ENCODE measurements at regions of chr21 and their contacts with region 1.

Region 1: GRCh38 chr21:37445228-37445627 is 78.7 kb downstream of the DYRK1A start:
- DNase-seq: no peak
- ATAC-seq: no peak
- H3K4me3 ChIP-seq: no peak overlapping the region
- H3K27ac ChIP-seq: no peak overlapping the region
- H3K4me1 ChIP-seq: peaks cover 14% of the 10 kb centered on the region
- H3K27me3 ChIP-seq: no peaks in the 10 kb centered on the region
- CTCF ChIP-seq: no peak

Region 2: DNA sequence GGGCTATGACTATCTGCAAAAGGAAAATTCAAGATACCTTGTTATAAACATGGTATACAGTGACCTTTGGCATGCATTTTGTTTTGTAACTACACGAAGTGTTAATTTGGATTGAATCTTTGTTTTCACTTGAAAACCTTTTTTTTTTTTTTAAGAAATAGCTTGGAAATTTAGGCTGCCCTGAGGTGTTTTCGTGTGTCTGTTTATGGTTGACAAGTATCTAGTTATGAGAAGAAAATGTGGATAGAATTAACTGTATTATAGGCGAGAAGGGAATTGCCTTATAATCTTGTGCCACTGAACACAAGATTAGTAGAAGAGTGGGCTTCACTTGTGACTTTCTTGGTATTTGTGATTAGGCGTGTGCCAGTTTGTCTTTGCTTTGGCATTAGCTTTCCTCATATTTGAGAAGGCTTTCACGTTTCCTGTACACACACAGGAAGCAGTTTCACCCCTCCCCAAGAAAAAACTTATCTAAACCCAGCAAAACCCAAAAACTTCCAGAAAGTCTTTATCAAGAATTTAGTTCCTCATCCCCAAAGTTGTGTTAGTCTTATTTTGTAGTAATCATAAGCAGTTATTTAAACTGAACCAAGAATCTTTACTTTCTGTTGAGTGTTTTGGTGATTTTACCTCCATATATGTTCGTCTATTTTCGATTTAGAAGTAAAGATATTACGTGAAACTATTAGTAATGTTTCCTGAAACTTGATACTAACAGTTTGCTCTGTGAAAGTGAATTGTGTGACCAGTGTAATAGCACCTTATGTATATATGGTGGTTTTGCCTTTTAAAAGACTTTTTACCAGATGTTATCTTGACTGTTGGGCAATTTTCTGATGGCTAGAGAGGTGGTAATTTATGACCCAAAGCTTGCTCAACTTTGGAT is 74.8 kb before region 1 on chr21:
- intact Hi-C with region 1: loop called (anchors 10 kb)
- DNase-seq: no peak
- ATAC-seq: no peak
- H3K4me3 ChIP-seq: peak overlapping the region; percentile 70
- H3K27ac ChIP-seq: peak overlapping the region; percentile 48
- H3K4me1 ChIP-seq: peaks cover 61% of the 10 kb centered on the region
- H3K27me3 ChIP-seq: no peaks in the 10 kb centered on the region
- CTCF ChIP-seq: no peak

Region 3: GRCh38 chr21:37593015-37593414 is 147.8 kb after region 1 on chr21:
- intact Hi-C with region 1: no loop called
- DNase-seq: no peak
- ATAC-seq: no peak
- H3K4me3 ChIP-seq: no peak overlapping the region
- H3K27ac ChIP-seq: no peak overlapping the region
- H3K4me1 ChIP-seq: no peaks in the 10 kb centered on the region
- H3K27me3 ChIP-seq: no peaks in the 10 kb centered on the region
- CTCF ChIP-seq: no peak

Measured in upper lobe of right lung (tissue), 1 donor.